CD4-positive, alpha-beta memory T cell (primary cell): ENCODE measurements at regions of chr7 and their contacts with region 1.

Region 1: DNA sequence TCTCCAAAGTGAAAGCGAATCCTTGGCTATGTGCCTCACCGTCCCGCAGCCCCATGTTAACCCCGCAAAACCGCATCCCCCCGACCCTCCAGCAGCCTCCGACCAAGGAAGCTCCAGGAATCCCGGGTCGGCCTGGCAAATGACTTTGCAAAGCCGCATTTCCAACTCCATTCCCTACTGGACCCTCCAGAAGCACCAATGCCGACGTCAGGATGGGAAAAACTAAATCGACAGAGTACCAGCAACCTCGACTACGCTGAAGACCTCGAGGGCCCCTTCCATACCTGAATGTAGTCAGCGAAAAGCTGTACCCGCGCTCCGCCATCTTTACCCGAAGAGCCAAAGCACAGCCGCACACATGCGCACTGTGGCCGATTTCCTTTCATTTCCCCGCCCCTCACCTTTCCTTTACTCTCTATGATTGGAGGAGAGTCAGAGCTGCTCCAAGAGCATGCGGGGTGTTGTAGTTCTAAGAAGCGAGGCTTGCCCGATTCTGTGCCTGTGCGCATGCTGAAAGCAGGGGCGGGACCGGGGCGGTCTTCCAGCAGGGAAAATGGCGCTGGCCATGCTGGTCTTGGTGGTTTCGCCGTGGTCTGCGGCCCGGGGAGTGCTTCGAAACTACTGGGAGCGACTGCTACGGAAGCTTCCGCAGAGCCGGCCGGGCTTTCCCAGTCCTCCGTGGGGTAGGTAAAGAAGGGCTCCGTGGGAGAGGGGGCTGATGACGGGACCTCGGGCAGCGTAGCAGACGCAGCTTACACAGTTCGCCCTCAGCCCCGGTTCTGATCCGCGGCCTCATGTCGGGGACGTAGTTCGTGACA is at the starts of genes MRPL32 and PSMA2:
- DNase-seq: peak; percentile 94 to 98 (median 96)
- H3K4me3 ChIP-seq: peak within 1 kb of the TSS; percentile 93 to 96
- H3K4me3 Mint-ChIP-seq: peak within 1 kb of the TSS; percentile 93 to 100 (median 99)
- H3K27ac ChIP-seq: peak within 1 kb of the TSS; percentile 94
- H3K27ac Mint-ChIP-seq: peak within 1 kb of the TSS; percentile 90 to 100 (median 99)
- H3K4me1 ChIP-seq: peaks cover 50% of the 10 kb centered on the region
- H3K4me1 Mint-ChIP-seq: peaks cover 44 to 85% (median 58%) of the 10 kb centered on the region in 4 donors
- H3K27me3 ChIP-seq: no peaks in the 10 kb centered on the region
- H3K27me3 Mint-ChIP-seq: no peaks in the 10 kb centered on the region
- total RNA-seq, gene MRPL32: 48.4 to 49.1 TPM
- total RNA-seq, gene PSMA2: 35.6 to 43.5 TPM

Region 2: DNA sequence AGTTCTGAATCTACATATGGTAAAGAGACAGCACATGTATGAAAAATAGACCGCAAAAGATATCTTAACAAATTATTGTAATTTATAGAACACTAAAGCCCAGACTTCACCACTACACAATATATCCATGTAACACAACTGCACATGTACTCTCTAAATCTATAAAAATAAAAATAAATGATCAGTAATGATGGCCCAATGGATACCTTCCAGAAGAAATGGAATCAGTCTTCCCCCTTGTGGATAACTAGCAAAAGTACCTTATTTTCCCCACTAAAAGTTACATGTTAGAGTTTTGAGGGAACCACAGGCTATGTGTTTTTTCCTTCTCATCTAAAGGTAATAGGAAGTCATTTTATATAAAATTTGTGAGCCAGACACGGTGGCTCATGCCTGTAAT is 45.9 kb before region 1 on chr7:
- CTCF ChIA-PET with region 1: no interaction called
- POLR2A ChIA-PET with region 1: interaction called, 15 read pairs
- intact Hi-C with region 1: loop called (anchors 2 kb)
- DNase-seq: no peak
- H3K4me3 ChIP-seq: no peak overlapping the region
- H3K4me3 Mint-ChIP-seq: peak overlapping the region in 1 of 8 donors; percentile 2
- H3K27ac ChIP-seq: no peak overlapping the region
- H3K27ac Mint-ChIP-seq: peak overlapping the region in 1 of 7 donors; percentile 22
- H3K4me1 ChIP-seq: peaks cover 17% of the 10 kb centered on the region
- H3K4me1 Mint-ChIP-seq: peaks cover 10 to 25% (median 18%) of the 10 kb centered on the region in 4 donors
- H3K27me3 ChIP-seq: peaks cover 4% of the 10 kb centered on the region
- H3K27me3 Mint-ChIP-seq: peaks cover 0 to 4% of the 10 kb centered on the region in 2 donors

Region 3: GRCh38 chr7:42911454-42912447 is 20.3 kb before region 1 on chr7 and contains the start of gene C7orf25:
- CTCF ChIA-PET with region 1: interaction called, 11 read pairs
- POLR2A ChIA-PET with region 1: interaction called, 70 read pairs
- intact Hi-C with region 1: loop called (anchors 1 kb)
- DNase-seq: peak; percentile 95 to 96 (median 95)
- H3K4me3 ChIP-seq: peak within 1 kb of the TSS; percentile 33 to 67
- H3K4me3 Mint-ChIP-seq: peak within 1 kb of the TSS; percentile 90 to 97 (median 94)
- H3K27ac ChIP-seq: peak within 1 kb of the TSS; percentile 62
- H3K27ac Mint-ChIP-seq: peak within 1 kb of the TSS; percentile 89 to 96 (median 94)
- H3K4me1 ChIP-seq: peaks cover 24% of the 10 kb centered on the region
- H3K4me1 Mint-ChIP-seq: peaks cover 13 to 36% (median 24%) of the 10 kb centered on the region in 4 donors
- H3K27me3 ChIP-seq: no peaks in the 10 kb centered on the region
- H3K27me3 Mint-ChIP-seq: no peaks in the 10 kb centered on the region
- total RNA-seq, gene C7orf25: 8.8 to 9.2 TPM

Region 4: GRCh38 chr7:43729214-43729923 is 797.3 kb after region 1 on chr7 and contains the start of gene COA1:
- CTCF ChIA-PET with region 1: no interaction called
- POLR2A ChIA-PET with region 1: interaction called, 6 read pairs
- intact Hi-C with region 1: loop called (anchors 5 kb)
- DNase-seq: peak; percentile 82 to 84 (median 83)
- H3K4me3 ChIP-seq: peak within 1 kb of the TSS; percentile 97 to 99
- H3K4me3 Mint-ChIP-seq: peak within 1 kb of the TSS; percentile 93 to 95 (median 94)
- H3K27ac ChIP-seq: peak within 1 kb of the TSS; percentile 67
- H3K27ac Mint-ChIP-seq: peak within 1 kb of the TSS; percentile 84 to 95 (median 91)
- H3K4me1 ChIP-seq: peaks cover 34% of the 10 kb centered on the region
- H3K4me1 Mint-ChIP-seq: peaks cover 27 to 43% (median 35%) of the 10 kb centered on the region in 4 donors
- H3K27me3 ChIP-seq: no peaks in the 10 kb centered on the region
- H3K27me3 Mint-ChIP-seq: no peaks in the 10 kb centered on the region
- total RNA-seq, gene COA1: 52.0 to 53.2 TPM